ENCODE measurements at regions of chr6 and their contacts with region 1.

Region 1: GRCh38 chr6:151323791-151324487 is 67.4 kb downstream of the ZBTB2 start:
- DNase-seq: peak; percentile 73 to 85 (median 82)
- ATAC-seq: peak; percentile 95
- H3K4me3 ChIP-seq: no peak overlapping the region
- H3K27ac ChIP-seq: no peak overlapping the region
- H3K4me1 ChIP-seq: peaks cover 0 to 6% of the 10 kb centered on the region in 2 experiments; a peak in 2 of 5 replicates
- H3K27me3 ChIP-seq: peaks cover 37 to 51% of the 10 kb centered on the region in 2 experiments
- CTCF ChIP-seq: peak; percentile 91 to 98 (median 96)
- EP300 ChIP-seq: no peak
- POLR2A ChIP-seq: no peak
- RAD21 ChIP-seq: peak; percentile 94 to 98

Region 2: DNA sequence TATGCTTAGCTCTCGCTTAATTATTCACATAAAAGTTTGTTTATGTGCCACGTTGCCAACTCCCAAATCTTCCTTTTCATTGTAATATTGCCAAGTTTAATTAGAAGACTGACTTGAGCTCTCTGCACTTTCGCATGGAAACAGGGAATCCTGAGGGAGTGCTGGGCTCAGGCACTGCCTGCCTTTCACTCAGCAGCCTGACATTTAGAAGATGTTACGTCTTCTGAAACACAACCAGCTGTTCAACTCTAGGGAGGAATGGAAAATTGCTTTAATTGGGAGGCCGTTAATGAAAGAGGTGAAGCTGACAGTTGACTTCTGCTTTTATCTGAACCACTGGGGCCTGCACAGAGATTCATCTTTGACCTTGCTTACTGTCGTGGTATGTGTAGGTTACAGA is 535.9 kb before region 1 on chr6:
- CTCF ChIA-PET with region 1: no interaction called
- POLR2A ChIA-PET with region 1: no interaction called
- in situ Hi-C with region 1: no loop called
- intact Hi-C with region 1: no loop called
- DNase-seq: no peak
- ATAC-seq: no peak
- H3K4me3 ChIP-seq: no peak overlapping the region
- H3K27ac ChIP-seq: no peak overlapping the region
- H3K4me1 ChIP-seq: no peaks in the 10 kb centered on the region
- H3K27me3 ChIP-seq: peaks cover 11 to 35% of the 10 kb centered on the region in 2 experiments
- CTCF ChIP-seq: no peak
- EP300 ChIP-seq: no peak
- POLR2A ChIP-seq: no peak
- RAD21 ChIP-seq: no peak

Region 3: GRCh38 chr6:151119823-151120524 is 204.0 kb before region 1 on chr6:
- CTCF ChIA-PET with region 1: interaction called, 3 read pairs
- POLR2A ChIA-PET with region 1: no interaction called
- in situ Hi-C with region 1: no loop called
- intact Hi-C with region 1: loop called (anchors 10 kb)
- DNase-seq: peak in 1 of 4 experiments; percentile 13
- ATAC-seq: peak; percentile 77
- H3K4me3 ChIP-seq: no peak overlapping the region
- H3K27ac ChIP-seq: no peak overlapping the region
- H3K4me1 ChIP-seq: no peaks in the 10 kb centered on the region
- H3K27me3 ChIP-seq: peaks cover 16 to 50% of the 10 kb centered on the region in 2 experiments; a peak in 4 of 5 replicates
- CTCF ChIP-seq: no peak
- EP300 ChIP-seq: no peak
- POLR2A ChIP-seq: no peak
- RAD21 ChIP-seq: no peak

Region 4: DNA sequence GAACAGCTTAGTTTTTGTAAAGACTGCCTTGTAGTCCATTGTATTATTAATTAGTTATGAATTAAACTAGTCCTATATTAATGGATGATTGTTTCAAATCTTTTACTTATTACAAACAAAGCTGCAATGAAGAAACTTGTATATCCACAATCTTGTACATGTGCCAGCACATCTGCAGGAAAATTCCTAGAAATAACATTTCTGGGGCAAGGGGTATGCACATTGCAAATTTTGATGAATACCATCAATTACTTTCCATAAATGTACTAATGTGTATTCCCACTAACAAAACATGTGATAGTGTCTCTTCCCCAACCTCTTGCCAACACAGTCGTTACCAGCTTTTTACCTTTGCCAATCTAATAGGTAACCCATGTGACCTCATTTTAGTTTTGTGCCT is 157.7 kb before region 1 on chr6:
- CTCF ChIA-PET with region 1: no interaction called
- POLR2A ChIA-PET with region 1: no interaction called
- in situ Hi-C with region 1: no loop called
- intact Hi-C with region 1: loop called (anchors 5 kb)
- DNase-seq: no peak
- ATAC-seq: no peak
- H3K4me3 ChIP-seq: no peak overlapping the region
- H3K27ac ChIP-seq: no peak overlapping the region
- H3K4me1 ChIP-seq: no peaks in the 10 kb centered on the region
- H3K27me3 ChIP-seq: peaks cover 39 to 53% of the 10 kb centered on the region in 2 experiments
- CTCF ChIP-seq: no peak
- EP300 ChIP-seq: no peak
- POLR2A ChIP-seq: no peak
- RAD21 ChIP-seq: no peak